CD8-positive, alpha-beta T cell (primary cell): ENCODE measurements at regions of chr18 and their contacts with region 1.

Region 1: DNA sequence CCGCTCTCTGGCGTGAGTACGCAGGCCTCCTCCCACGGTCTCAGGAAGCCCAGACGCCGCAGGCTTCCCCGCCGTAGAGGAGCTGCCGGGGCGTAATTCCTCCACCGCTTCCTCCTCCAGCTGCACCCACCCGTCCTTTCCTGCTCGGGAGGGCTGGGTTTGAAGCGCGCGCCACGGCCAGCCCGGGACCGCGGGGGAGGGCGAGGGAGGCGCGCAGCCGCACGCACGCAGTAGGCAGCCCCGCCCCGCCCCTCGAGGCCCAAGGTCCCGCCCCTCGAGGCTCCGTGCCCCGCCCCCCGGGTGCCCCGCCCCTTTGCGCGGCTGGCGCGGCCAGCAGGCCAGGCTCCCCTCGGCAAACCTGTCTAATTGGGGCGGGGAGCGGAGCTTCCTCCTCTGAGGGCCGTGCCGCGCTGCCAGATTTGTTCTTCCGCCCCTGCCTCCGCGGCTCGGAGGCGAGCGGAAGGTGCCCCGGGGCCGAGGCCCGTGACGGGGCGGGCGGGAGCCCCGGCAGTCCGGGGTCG is at the start of gene MALT1:
- DNase-seq: peak; percentile 91 to 99 (median 95)
- ATAC-seq: peak; percentile 90
- H3K4me3 ChIP-seq: peak within 1 kb of the TSS; percentile 81 to 83
- H3K4me3 Mint-ChIP-seq: peak within 1 kb of the TSS; percentile 96
- H3K27ac ChIP-seq: peak within 1 kb of the TSS; percentile 67 to 84
- H3K27ac Mint-ChIP-seq: peak within 1 kb of the TSS; percentile 95
- H3K4me1 ChIP-seq: peaks cover 46% of the 10 kb centered on the region
- H3K4me1 Mint-ChIP-seq: peaks cover 48% of the 10 kb centered on the region
- H3K27me3 ChIP-seq: no peaks in the 10 kb centered on the region
- H3K27me3 Mint-ChIP-seq: no peaks in the 10 kb centered on the region
- CTCF ChIP-seq: no peak
- total RNA-seq, gene MALT1: 67.9 to 69.9 TPM

Region 2: DNA sequence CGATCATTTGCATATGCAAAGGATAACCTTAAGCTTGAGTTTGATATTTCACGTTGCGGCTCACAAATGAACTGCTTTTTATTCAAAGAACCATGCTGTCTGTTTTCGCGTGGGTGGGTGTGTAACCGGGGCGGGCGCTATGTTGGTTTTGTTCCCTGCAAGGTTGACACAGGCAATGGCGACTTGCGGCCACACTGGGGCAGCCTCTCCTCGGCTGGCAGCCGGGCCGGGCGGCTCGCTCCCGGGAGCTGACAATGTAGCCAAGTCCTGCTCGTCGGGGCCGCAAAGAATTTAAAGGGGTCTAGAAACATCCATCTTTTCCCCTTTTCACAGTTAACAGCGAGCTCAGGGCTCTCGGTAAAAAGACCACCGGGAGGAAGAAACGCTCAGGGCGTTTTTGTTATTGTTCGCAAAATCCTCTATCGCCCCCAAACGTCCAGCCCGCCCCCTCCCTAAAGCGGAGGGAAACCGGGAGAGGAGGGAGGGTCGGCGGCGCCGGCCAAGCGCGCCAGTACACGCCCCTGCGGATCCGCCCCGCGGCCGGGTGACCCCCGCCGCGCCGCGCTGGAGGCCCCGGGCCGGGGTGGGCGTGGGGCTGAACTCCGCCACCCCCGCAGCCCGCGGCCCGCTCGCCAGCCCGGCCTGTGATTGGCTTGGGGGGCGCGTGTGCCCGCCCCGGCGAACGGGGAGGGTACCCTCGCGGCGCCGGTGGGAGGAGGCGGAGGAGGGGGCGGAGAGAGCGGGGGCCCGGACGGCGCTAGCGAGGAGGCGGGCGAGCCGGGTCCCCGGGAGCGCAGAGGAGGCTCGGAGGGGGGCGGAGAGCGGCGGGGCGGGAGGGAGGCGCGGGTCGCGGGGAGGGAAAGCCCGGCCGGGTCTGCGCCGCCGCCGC is 627.4 kb before region 1 on chr18 and contains the start of gene NEDD4L:
- CTCF ChIA-PET with region 1: no interaction called
- POLR2A ChIA-PET with region 1: no interaction called
- intact Hi-C with region 1: loop called (anchors 5 to 10 kb)
- DNase-seq: peak; percentile 44 to 87 (median 78)
- ATAC-seq: peak; percentile 71
- H3K4me3 ChIP-seq: peak within 1 kb of the TSS; percentile 65 to 91
- H3K4me3 Mint-ChIP-seq: peak within 1 kb of the TSS; percentile 96
- H3K27ac ChIP-seq: peak within 1 kb of the TSS in 1 of 2 experiments; percentile 53
- H3K27ac Mint-ChIP-seq: peak within 1 kb of the TSS; percentile 70
- H3K4me1 ChIP-seq: peaks cover 15% of the 10 kb centered on the region
- H3K4me1 Mint-ChIP-seq: peaks cover 28% of the 10 kb centered on the region
- H3K27me3 ChIP-seq: no peaks in the 10 kb centered on the region
- H3K27me3 Mint-ChIP-seq: peaks cover 9% of the 10 kb centered on the region
- CTCF ChIP-seq: peak; percentile 38
- total RNA-seq, gene NEDD4L: 10.0 to 10.9 TPM

Region 3: GRCh38 chr18:58615140-58616132 is 55.7 kb before region 1 on chr18:
- CTCF ChIA-PET with region 1: interaction called, 4 read pairs
- POLR2A ChIA-PET with region 1: interaction called, 16 read pairs
- intact Hi-C with region 1: loop called in 1 of 2 experiments (anchors 1 kb)
- DNase-seq: peak; percentile 8 to 84 (median 56)
- ATAC-seq: peak; percentile 95
- H3K4me3 ChIP-seq: peak overlapping the region; percentile 1 to 16
- H3K4me3 Mint-ChIP-seq: peak overlapping the region; percentile 75
- H3K27ac ChIP-seq: peak overlapping the region; percentile 55 to 89
- H3K27ac Mint-ChIP-seq: peak overlapping the region; percentile 95
- H3K4me1 ChIP-seq: peaks cover 40% of the 10 kb centered on the region
- H3K4me1 Mint-ChIP-seq: peaks cover 41% of the 10 kb centered on the region
- H3K27me3 ChIP-seq: no peaks in the 10 kb centered on the region
- H3K27me3 Mint-ChIP-seq: no peaks in the 10 kb centered on the region
- CTCF ChIP-seq: no peak

Region 4: DNA sequence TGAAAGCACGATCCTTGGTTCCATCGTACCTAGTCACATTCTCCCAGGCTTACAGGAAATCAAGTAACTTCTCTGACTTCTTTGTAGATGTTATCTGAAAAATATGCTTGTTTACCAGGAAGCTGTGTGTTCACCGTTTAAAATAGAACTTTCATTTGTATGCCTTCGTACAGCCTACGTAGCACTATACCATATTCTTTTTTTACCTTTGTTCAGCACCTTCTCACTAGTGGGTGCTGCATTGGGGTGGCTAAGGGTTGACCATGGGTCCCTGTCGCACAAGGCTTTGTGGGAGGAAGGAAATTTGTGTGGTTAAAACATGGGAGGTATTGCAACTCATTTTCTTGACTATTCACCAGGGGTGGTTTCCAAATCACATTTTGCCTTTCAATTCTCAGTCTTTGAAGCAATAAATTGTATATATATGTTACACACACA is 16.7 kb after region 1 on chr18:
- CTCF ChIA-PET with region 1: interaction called, 8 read pairs
- POLR2A ChIA-PET with region 1: interaction called, 89 read pairs
- intact Hi-C with region 1: loop called (anchors 1 to 2 kb)
- DNase-seq: peak; percentile 19 to 91 (median 61)
- ATAC-seq: peak; percentile 96
- H3K4me3 ChIP-seq: no peak overlapping the region
- H3K4me3 Mint-ChIP-seq: peak overlapping the region; percentile 77
- H3K27ac ChIP-seq: peak overlapping the region; percentile 40 to 67
- H3K27ac Mint-ChIP-seq: peak overlapping the region; percentile 97
- H3K4me1 ChIP-seq: peaks cover 52% of the 10 kb centered on the region
- H3K4me1 Mint-ChIP-seq: peaks cover 78% of the 10 kb centered on the region
- H3K27me3 ChIP-seq: no peaks in the 10 kb centered on the region
- H3K27me3 Mint-ChIP-seq: no peaks in the 10 kb centered on the region
- CTCF ChIP-seq: no peak

Region 5: GRCh38 chr18:58748899-58749595 is 77.9 kb after region 1 on chr18:
- CTCF ChIA-PET with region 1: interaction called, 4 read pairs
- POLR2A ChIA-PET with region 1: interaction called, 10 read pairs
- intact Hi-C with region 1: loop called in 1 of 2 experiments (anchors 5 kb)
- DNase-seq: no peak
- ATAC-seq: no peak
- H3K4me3 ChIP-seq: no peak overlapping the region
- H3K4me3 Mint-ChIP-seq: no peak overlapping the region
- H3K27ac ChIP-seq: no peak overlapping the region
- H3K27ac Mint-ChIP-seq: no peak overlapping the region
- H3K4me1 ChIP-seq: no peaks in the 10 kb centered on the region
- H3K4me1 Mint-ChIP-seq: no peaks in the 10 kb centered on the region
- H3K27me3 ChIP-seq: no peaks in the 10 kb centered on the region
- H3K27me3 Mint-ChIP-seq: no peaks in the 10 kb centered on the region
- CTCF ChIP-seq: no peak

Region 6: GRCh38 chr18:58768293-58768974 is 97.3 kb after region 1 on chr18:
- CTCF ChIA-PET with region 1: interaction called, 22 read pairs
- POLR2A ChIA-PET with region 1: interaction called, 12 read pairs
- intact Hi-C with region 1: loop called (anchors 1 to 5 kb)
- DNase-seq: peak; percentile 34 to 77 (median 64)
- ATAC-seq: peak; percentile 78
- H3K4me3 ChIP-seq: no peak overlapping the region
- H3K4me3 Mint-ChIP-seq: peak overlapping the region; percentile 57
- H3K27ac ChIP-seq: no peak overlapping the region
- H3K27ac Mint-ChIP-seq: no peak overlapping the region
- H3K4me1 ChIP-seq: peaks cover 13% of the 10 kb centered on the region
- H3K4me1 Mint-ChIP-seq: peaks cover 11% of the 10 kb centered on the region
- H3K27me3 ChIP-seq: peaks cover 0 to 4% of the 10 kb centered on the region in 2 experiments
- H3K27me3 Mint-ChIP-seq: peaks cover 41% of the 10 kb centered on the region
- CTCF ChIP-seq: peak; percentile 42